PC-9 (cell line): ENCODE measurements at regions of chr2 and their contacts with region 1.

Region 1: DNA sequence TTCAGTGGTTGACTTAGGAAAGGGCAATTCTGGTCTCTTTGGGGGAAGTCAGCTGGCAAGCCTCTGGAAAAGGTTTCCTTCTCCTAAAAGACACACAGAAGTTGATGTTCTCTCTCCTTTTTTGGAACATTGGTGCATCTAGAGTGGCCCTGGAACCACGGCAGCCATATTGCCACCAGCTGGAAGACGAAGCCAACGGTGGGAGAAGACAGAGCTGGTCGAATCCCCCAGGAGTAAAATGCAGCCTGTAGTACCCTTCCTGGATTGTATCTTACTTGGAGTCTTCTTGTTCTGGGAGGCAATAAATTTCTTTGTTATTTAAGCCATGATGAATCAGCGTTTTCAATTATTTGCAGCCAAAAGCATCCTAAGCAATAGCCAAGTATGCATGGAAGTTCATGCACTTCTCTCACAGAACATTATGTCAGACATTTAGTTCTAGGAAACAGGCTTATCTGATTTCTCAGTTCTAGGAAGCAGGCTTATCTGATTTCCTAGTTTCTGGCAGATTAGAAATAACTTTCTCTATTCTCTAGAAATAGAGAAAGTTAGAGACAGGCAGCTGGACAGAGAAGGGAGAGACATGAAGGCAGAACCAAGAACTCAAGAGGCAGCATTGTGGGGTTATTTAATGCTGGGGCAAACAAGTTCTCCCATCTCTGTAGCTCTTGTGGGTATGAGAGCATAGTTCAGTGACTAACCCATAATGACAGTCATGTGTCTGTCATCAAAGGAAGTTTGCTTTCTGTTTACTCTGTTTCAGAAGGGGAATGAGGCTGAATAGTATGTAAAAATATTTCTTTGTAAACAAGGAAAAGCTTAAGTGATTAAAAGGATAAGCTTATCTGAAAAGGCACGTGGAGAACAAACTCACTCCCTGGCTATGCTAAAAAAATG is 40.5 kb upstream of the NABP1 start:
- DNase-seq: peak in 1 of 2 experiments; percentile 91
- H3K4me3 ChIP-seq: peak overlapping the region; percentile 47
- H3K27ac ChIP-seq: peak overlapping the region; percentile 100
- H3K4me1 ChIP-seq: peaks cover 72% of the 10 kb centered on the region
- H3K27me3 ChIP-seq: no peaks in the 10 kb centered on the region
- CTCF ChIP-seq: no peak

Region 2: DNA sequence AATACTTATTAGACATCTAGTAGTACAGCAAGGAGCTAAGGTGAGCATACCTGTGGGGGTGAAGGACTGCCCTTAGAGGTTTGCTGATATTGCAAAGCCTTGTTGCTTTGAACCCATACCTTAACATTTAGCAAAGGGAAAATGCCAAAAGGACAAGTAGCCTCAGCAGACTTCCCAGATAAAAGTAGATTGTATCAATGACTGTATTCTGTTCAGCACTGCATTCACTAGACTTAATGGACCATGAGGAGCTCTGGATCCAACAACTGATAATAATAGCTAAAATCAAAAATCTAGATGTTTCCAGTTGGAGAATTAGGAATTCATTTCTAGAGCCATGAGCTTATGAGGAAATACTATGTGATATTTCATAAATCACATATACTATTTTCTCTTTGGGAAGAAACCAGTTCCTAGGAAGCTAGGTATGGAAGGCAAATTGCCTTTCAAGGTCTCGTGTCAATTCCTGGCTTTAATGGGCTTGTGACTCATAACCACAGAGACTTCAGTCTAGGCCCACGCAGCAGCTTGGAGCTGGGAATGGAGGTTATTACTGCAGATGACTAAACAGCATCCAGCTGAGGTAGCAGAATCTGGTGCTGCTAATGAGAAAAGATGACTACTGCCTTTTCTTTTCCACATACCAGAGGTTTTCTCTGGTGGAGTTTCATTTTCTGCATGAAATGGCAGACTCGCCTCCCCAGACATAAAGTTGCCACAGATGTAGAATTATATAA is 150.7 kb before region 1 on chr2:
- CTCF ChIA-PET with region 1: no interaction called
- POLR2A ChIA-PET with region 1: no interaction called
- intact Hi-C with region 1: no loop called
- DNase-seq: peak; percentile 20 to 74
- H3K4me3 ChIP-seq: no peak overlapping the region
- H3K27ac ChIP-seq: no peak overlapping the region
- H3K4me1 ChIP-seq: no peaks in the 10 kb centered on the region
- H3K27me3 ChIP-seq: no peaks in the 10 kb centered on the region
- CTCF ChIP-seq: no peak

Region 3: DNA sequence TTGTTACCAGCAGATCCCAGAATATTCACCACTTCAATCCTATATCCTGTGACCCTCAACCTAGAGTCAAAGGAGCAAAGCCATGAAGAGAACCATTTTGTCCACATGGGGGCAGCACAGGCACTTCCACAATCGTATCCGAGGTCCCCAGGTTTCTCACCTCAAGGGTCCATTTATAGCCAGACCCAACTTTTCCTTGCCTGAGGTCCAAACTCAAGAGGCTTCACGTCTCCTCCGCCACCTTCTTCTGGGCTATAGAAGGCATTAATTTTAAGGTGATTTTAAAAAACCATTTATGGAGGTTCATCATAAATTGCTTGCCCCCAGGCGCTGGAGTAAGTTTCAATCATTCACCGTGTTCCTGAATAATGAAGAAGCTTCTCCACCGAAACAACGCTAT is 71.1 kb before region 1 on chr2:
- CTCF ChIA-PET with region 1: interaction called, 6 read pairs
- POLR2A ChIA-PET with region 1: interaction called, 6 read pairs
- intact Hi-C with region 1: loop called (anchors 2 kb)
- DNase-seq: peak; percentile 48 to 63
- H3K4me3 ChIP-seq: no peak overlapping the region
- H3K27ac ChIP-seq: peak overlapping the region; percentile 63
- H3K4me1 ChIP-seq: peaks cover 46% of the 10 kb centered on the region
- H3K27me3 ChIP-seq: no peaks in the 10 kb centered on the region
- CTCF ChIP-seq: peak; percentile 77

Region 4: DNA sequence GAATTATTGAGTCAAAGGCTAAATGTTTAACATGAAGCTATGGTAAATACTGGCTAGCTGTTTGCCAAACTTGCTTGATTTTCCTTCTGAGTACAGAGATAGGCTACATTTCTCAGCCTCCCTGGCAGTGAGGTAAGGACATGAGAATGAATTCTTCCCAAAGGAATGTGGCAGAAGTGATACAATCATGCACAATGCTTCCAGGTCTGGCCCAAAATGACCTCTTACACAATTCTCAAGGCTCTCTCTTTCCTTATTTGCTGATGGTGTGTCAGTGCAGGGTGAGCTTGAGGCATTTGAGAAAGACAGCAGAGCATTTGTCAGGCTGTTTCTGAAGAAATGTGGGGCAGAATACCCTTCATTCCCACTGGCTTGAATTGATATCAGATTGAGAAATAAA is 55.1 kb before region 1 on chr2:
- CTCF ChIA-PET with region 1: no interaction called
- POLR2A ChIA-PET with region 1: interaction called, 4 read pairs
- intact Hi-C with region 1: loop called (anchors 1 kb)
- DNase-seq: peak; percentile 51 to 91
- H3K4me3 ChIP-seq: no peak overlapping the region
- H3K27ac ChIP-seq: peak overlapping the region; percentile 94
- H3K4me1 ChIP-seq: peaks cover 31% of the 10 kb centered on the region
- H3K27me3 ChIP-seq: no peaks in the 10 kb centered on the region
- CTCF ChIP-seq: no peak

Region 5: DNA sequence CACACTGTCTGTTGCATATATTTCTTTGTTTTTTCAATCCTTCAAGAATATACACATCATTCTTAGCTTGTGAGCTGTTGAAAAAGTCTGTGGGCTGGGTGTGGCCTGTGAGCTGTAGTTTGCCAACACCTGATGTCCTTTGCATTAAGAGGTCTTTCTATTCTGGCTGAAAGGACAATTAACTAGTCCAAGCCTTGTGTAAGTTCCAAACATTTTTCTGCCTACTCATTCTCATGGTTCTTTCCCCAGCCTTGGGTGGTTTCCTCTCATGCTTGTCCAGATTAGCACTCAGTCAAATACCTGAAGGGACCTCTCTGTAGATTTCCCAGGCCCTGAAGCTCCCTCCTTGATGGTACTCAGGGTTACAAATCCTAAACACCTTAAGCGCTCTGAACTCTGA is 17.3 kb before region 1 on chr2:
- CTCF ChIA-PET with region 1: no interaction called
- POLR2A ChIA-PET with region 1: interaction called, 8 read pairs
- intact Hi-C with region 1: loop called (anchors 2 kb)
- DNase-seq: peak; percentile 44 to 84
- H3K4me3 ChIP-seq: no peak overlapping the region
- H3K27ac ChIP-seq: peak overlapping the region; percentile 86
- H3K4me1 ChIP-seq: peaks cover 71% of the 10 kb centered on the region
- H3K27me3 ChIP-seq: no peaks in the 10 kb centered on the region
- CTCF ChIP-seq: no peak

Region 6: GRCh38 chr2:191691016-191691735 is 53.7 kb after region 1 on chr2:
- CTCF ChIA-PET with region 1: no interaction called
- POLR2A ChIA-PET with region 1: interaction called, 4 read pairs
- intact Hi-C with region 1: loop called (anchors 2 kb)
- DNase-seq: peak in 1 of 2 experiments; percentile 71
- H3K4me3 ChIP-seq: no peak overlapping the region
- H3K27ac ChIP-seq: peak overlapping the region; percentile 51
- H3K4me1 ChIP-seq: peaks cover 56% of the 10 kb centered on the region
- H3K27me3 ChIP-seq: no peaks in the 10 kb centered on the region
- CTCF ChIP-seq: peak; percentile 67

Region 7: DNA sequence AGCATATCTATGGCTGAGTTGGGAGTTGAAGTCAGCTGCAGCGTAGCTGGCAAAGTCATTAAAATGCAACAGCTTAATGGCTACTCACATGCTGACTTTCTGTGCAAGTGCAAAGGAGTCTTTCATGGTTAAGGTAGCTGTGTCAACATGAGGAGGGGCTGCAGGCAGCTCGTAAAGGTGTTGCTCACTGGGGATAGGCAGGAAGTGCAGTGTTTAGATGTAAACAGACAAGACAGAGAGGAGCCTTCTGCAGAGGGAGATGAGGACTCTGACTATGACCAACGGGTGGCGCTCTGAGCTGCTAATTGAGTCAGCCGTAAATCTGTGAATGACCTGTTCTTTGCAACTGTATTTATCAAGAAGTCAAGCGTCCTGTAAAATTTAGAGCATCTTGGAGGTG is 231.7 kb after region 1 on chr2:
- CTCF ChIA-PET with region 1: no interaction called
- POLR2A ChIA-PET with region 1: no interaction called
- intact Hi-C with region 1: loop called (anchors 5 kb)
- DNase-seq: no peak
- H3K4me3 ChIP-seq: no peak overlapping the region
- H3K27ac ChIP-seq: no peak overlapping the region
- H3K4me1 ChIP-seq: peaks cover 24% of the 10 kb centered on the region
- H3K27me3 ChIP-seq: no peaks in the 10 kb centered on the region
- CTCF ChIP-seq: no peak